Activated T-helper 2 cell treated with anti-CD3 and anti-CD28 coated beads, Interferon-gamma antibody, Interleukin-2, Interleukin-4, amounts not matched to agents 10 μg/mL and 5 μg/mL and 100 μg/mL, durations not matched to agents 14 hours and 24 hours and 36 hours (primary cell): ENCODE measurements at regions of chr3 and their contacts with region 1.

Region 1: DNA sequence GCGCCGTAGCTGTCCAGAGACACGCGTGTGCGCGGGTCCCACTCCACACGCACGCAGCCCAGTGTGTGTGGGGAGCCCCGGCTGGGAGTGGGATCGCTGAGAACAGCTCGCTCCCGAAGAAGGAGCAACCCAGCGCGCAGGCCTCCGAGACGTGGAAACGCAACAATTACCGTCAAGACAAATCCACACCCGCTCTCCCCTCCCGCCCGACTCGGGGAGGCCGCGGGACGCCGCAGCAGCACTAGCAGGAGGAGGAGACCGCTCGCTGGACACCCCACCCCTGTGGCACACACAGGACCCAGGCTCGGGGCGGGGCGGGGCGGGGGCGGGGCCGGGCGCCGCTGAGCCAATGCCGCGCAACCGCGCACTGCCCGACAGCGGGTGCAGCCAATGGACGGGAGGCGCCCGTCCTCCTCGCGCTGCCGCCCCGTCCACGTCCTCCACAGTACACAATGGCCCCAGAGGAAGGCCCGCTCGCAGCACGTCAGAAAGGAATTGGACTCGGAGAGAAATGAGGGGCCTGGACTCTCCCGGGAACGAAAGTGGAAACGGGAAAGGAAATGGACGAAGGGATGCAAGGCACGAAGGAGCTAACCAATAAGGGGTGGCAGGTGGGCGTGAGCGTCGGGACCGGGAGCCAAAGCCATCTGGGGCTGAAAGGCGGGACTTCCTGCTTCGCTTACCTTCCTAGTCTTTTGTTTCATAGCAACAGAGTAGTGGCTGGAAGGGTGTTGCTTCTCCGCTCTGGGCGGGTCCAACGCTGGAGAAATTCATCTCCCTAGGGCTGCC is at the start of gene CBLB:
- DNase-seq: peak; percentile 82
- H3K4me3 Mint-ChIP-seq: peak within 1 kb of the TSS; percentile 89
- H3K27ac Mint-ChIP-seq: peak within 1 kb of the TSS; percentile 93
- H3K4me1 Mint-ChIP-seq: peaks cover 26% of the 10 kb centered on the region
- H3K27me3 Mint-ChIP-seq: no peaks in the 10 kb centered on the region
- total RNA-seq, gene CBLB: 146 and 152 TPM in 2 replicates

Region 2: GRCh38 chr3:105752744-105753415 is 116.1 kb before region 1 on chr3:
- intact Hi-C with region 1: loop called (anchors 2 kb)
- DNase-seq: peak; percentile 39
- H3K4me3 Mint-ChIP-seq: peak overlapping the region; percentile 48
- H3K27ac Mint-ChIP-seq: peak overlapping the region; percentile 95
- H3K4me1 Mint-ChIP-seq: peaks cover 70% of the 10 kb centered on the region
- H3K27me3 Mint-ChIP-seq: no peaks in the 10 kb centered on the region

Region 3: DNA sequence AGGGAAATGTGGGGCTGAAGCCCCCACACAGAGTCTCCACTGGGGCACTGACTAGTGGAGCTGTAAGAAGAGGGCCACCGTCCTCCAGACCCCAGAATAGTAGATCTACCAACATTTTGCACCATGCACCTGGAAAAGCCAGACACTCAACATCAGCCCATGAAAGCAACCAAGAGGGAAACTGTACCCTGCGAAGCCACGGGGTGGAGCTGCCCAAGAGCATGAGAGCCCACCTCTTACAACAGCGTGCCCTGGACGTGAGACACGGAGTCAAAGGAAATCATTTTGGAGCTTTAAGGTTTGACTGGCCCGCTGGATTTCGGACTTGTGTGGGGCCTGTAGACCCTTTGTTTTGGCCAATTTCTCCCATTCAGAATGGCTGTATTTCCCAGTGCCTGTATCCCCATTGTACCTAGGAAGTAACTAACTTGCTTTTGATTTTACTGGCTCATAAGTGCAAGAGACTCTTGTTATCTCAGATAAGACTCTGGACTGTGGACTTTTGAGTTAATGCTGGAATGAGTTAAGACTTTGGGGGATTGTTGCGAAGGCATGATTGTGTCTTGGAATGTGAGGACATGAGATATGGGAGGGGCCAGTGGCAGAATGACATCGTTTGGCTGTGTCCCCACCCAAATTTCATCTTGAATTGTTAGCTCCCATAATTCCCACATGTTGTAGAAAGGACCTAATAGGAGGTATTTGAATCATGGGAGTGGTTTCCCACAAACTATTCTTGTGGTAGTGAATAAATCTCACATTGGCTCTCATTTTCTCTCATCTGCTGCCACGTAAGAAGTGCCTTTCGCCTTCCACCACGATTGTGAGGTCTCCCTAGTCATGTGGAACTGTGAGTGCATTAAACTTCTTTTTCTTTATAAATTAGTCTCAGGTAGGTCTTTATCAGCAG is 105.9 kb before region 1 on chr3:
- intact Hi-C with region 1: no loop called
- DNase-seq: no peak
- H3K4me3 Mint-ChIP-seq: no peak overlapping the region
- H3K27ac Mint-ChIP-seq: peak overlapping the region; percentile 71
- H3K4me1 Mint-ChIP-seq: peaks cover 50% of the 10 kb centered on the region
- H3K27me3 Mint-ChIP-seq: no peaks in the 10 kb centered on the region

Region 4: DNA sequence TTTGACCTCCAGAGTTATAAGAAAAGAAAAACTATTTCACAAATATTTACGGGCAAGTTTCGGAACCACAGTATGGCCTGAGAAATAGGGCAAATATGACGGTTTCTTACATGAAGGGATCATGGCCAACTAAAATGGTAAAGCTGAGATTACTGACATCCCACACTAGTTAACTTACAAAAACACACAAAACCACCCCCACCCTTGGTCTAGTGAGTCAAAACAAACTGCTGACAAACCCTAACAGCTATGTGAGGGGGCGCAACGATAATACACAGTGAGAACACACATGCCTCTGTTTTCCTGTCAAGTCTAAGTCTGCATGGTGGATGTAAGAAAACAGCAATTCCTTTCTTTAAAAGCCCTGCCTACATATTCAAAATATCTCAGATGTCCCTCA is 32.4 kb before region 1 on chr3:
- intact Hi-C with region 1: loop called (anchors 1 kb)
- DNase-seq: no peak
- H3K4me3 Mint-ChIP-seq: peak overlapping the region; percentile 47
- H3K27ac Mint-ChIP-seq: peak overlapping the region; percentile 83
- H3K4me1 Mint-ChIP-seq: peaks cover 67% of the 10 kb centered on the region
- H3K27me3 Mint-ChIP-seq: no peaks in the 10 kb centered on the region

Region 5: DNA sequence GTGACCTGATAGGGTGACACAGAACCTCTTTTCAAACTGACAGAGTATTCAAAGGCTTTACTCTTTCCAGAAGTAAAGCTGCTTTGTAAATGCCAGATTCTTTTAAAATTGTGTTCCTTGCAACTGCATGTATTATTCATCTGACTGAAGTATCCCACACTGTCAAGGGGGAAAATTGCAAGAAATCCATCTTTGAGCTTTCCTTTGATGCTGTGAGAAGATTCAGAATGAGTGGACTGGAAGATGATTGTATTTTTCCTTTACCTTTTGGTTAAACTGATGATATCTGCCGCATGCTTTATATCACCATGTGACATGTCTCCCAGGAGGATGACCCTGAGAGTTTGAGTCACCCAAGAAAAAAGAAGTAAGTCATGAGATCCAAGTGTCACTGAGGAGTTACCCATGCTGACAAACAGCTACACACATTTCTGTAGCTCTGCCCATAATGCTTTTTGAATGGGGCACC is 250.7 kb after region 1 on chr3:
- intact Hi-C with region 1: loop called (anchors 5 kb)
- DNase-seq: no peak
- H3K4me3 Mint-ChIP-seq: no peak overlapping the region
- H3K27ac Mint-ChIP-seq: peak overlapping the region; percentile 80
- H3K4me1 Mint-ChIP-seq: peaks cover 23% of the 10 kb centered on the region
- H3K27me3 Mint-ChIP-seq: no peaks in the 10 kb centered on the region

Region 6: GRCh38 chr3:106130384-106131198 is 261.7 kb after region 1 on chr3:
- intact Hi-C with region 1: no loop called
- DNase-seq: no peak
- H3K4me3 Mint-ChIP-seq: no peak overlapping the region
- H3K27ac Mint-ChIP-seq: peak overlapping the region; percentile 48
- H3K4me1 Mint-ChIP-seq: peaks cover 14% of the 10 kb centered on the region
- H3K27me3 Mint-ChIP-seq: no peaks in the 10 kb centered on the region

Region 7: GRCh38 chr3:106183762-106184391 is 314.9 kb after region 1 on chr3:
- intact Hi-C with region 1: loop called (anchors 2 kb)
- DNase-seq: no peak
- H3K4me3 Mint-ChIP-seq: no peak overlapping the region
- H3K27ac Mint-ChIP-seq: peak overlapping the region; percentile 35
- H3K4me1 Mint-ChIP-seq: peaks cover 51% of the 10 kb centered on the region
- H3K27me3 Mint-ChIP-seq: no peaks in the 10 kb centered on the region

Region 8: GRCh38 chr3:106428565-106428994 is 559.6 kb after region 1 on chr3:
- intact Hi-C with region 1: loop called (anchors 2 kb)
- DNase-seq: no peak
- H3K4me3 Mint-ChIP-seq: no peak overlapping the region
- H3K27ac Mint-ChIP-seq: peak overlapping the region; percentile 93
- H3K4me1 Mint-ChIP-seq: peaks cover 44% of the 10 kb centered on the region
- H3K27me3 Mint-ChIP-seq: no peaks in the 10 kb centered on the region